ENCODE measurements at regions of chr4 and their contacts with region 1.

Region 1: GRCh38 chr4:27318743-27319142 is 458.1 kb downstream of the STIM2 start:
- DNase-seq: no peak
- H3K4me3 Mint-ChIP-seq: no peak overlapping the region
- H3K27ac Mint-ChIP-seq: no peak overlapping the region
- H3K4me1 Mint-ChIP-seq: no peaks in the 10 kb centered on the region
- H3K27me3 Mint-ChIP-seq: no peaks in the 10 kb centered on the region

Region 2: GRCh38 chr4:25727711-25728493 is 1590.8 kb before region 1 on chr4:
- intact Hi-C with region 1: no loop called
- DNase-seq: no peak
- H3K4me3 Mint-ChIP-seq: no peak overlapping the region
- H3K27ac Mint-ChIP-seq: no peak overlapping the region
- H3K4me1 Mint-ChIP-seq: no peaks in the 10 kb centered on the region
- H3K27me3 Mint-ChIP-seq: no peaks in the 10 kb centered on the region

Region 3: GRCh38 chr4:27048429-27049238 is 270.1 kb before region 1 on chr4:
- intact Hi-C with region 1: loop called (anchors 5 kb)
- DNase-seq: no peak
- H3K4me3 Mint-ChIP-seq: no peak overlapping the region
- H3K27ac Mint-ChIP-seq: no peak overlapping the region
- H3K4me1 Mint-ChIP-seq: peaks cover 3% of the 10 kb centered on the region
- H3K27me3 Mint-ChIP-seq: peaks cover 43% of the 10 kb centered on the region